Activated CD4-positive, alpha-beta memory T cell treated with anti-CD3 and anti-CD28 coated beads for 36 hours (primary cell): ENCODE measurements at regions of chr11 and their contacts with region 1.

Region 1: GRCh38 chr11:45736424-45736823 is 68.5 kb upstream of the SLC35C1 start:
- DNase-seq: no peak
- H3K4me3 Mint-ChIP-seq: no peak overlapping the region
- H3K27ac Mint-ChIP-seq: no peak overlapping the region
- H3K4me1 Mint-ChIP-seq: peaks cover 7% of the 10 kb centered on the region
- H3K27me3 Mint-ChIP-seq: peaks cover 5% of the 10 kb centered on the region

Region 2: GRCh38 chr11:45725776-45726492 is 10.5 kb before region 1 on chr11:
- CTCF ChIA-PET with region 1: no interaction called
- POLR2A ChIA-PET with region 1: no interaction called
- intact Hi-C with region 1: loop called (anchors 1 kb)
- DNase-seq: peak; percentile 14
- H3K4me3 Mint-ChIP-seq: no peak overlapping the region
- H3K27ac Mint-ChIP-seq: peak overlapping the region; percentile 46
- H3K4me1 Mint-ChIP-seq: peaks cover 5% of the 10 kb centered on the region
- H3K27me3 Mint-ChIP-seq: peaks cover 16% of the 10 kb centered on the region